ENCODE measurements at regions of chr1 and their contacts with region 1.

Region 1: GRCh38 chr1:85612704-85613361 is 32.3 kb downstream of the CCN1 start:
- DNase-seq: peak; percentile 94
- ATAC-seq: peak; percentile 58
- H3K4me3 ChIP-seq: no peak overlapping the region
- H3K27ac ChIP-seq: peak overlapping the region; percentile 89
- H3K4me1 ChIP-seq: peaks cover 30% of the 10 kb centered on the region
- H3K27me3 ChIP-seq: no peaks in the 10 kb centered on the region
- CTCF ChIP-seq: peak; percentile 76
- POLR2A ChIP-seq: no peak; the same call in 1 of the 2 replicates
- RAD21 ChIP-seq: peak; percentile 78

Region 2: DNA sequence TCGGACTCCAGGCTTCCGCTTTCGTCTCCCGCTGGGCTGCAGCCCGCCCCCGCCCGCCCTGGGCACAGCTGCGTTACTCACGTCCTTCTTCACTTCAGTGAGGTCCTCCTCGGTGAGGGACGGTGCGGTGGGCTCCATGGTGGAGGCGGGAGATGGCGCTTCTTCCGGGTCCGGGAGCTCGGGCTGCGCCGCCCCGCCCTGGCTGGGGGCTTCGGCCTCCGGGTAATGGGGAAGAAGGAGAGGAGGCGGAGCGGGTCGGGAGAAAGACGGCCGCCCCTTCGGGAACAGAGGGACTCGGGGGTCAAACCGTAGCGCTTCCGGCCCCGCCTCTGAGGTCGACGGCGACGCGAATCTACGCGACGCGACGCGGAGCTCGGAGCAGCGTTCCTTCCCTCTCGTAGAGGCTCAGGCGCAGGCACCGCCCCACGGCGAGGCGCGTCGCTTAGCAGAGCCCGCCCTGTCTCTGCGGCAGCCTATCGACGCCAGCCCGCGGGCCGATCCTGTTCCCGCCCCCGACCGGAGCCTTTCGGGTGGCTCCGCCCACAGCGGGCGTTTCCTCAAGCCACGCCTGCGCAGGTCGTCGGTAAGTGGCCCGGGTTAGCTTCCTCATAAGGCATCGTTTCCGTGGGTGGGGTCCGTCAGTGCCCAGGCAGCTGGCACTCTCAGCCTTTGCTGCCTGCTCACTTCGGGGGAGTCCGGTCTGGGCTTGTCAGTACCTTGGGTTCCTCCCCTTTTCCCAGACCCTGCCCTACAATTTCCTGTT is 336.4 kb before region 1 on chr1 and contains the start of gene BCL10:
- CTCF ChIA-PET with region 1: no interaction called
- POLR2A ChIA-PET with region 1: no interaction called
- dilution Hi-C with region 1: no loop called
- in situ Hi-C with region 1: no loop called
- intact Hi-C with region 1: no loop called
- DNase-seq: peak; percentile 97
- ATAC-seq: peak; percentile 96
- H3K4me3 ChIP-seq: peak within 1 kb of the TSS; percentile 97
- H3K27ac ChIP-seq: peak within 1 kb of the TSS; percentile 98
- H3K4me1 ChIP-seq: peaks cover 6% of the 10 kb centered on the region
- H3K27me3 ChIP-seq: no peaks in the 10 kb centered on the region
- CTCF ChIP-seq: no peak
- POLR2A ChIP-seq: peak; percentile 90
- RAD21 ChIP-seq: no peak
- total RNA-seq, gene BCL10: 30.5 and 51.4 TPM in 2 replicates

Region 3: GRCh38 chr1:85484264-85484663 is 128.6 kb before region 1 on chr1:
- CTCF ChIA-PET with region 1: no interaction called
- POLR2A ChIA-PET with region 1: no interaction called
- dilution Hi-C with region 1: no loop called
- in situ Hi-C with region 1: no loop called
- intact Hi-C with region 1: no loop called
- DNase-seq: no peak
- ATAC-seq: no peak
- H3K4me3 ChIP-seq: no peak overlapping the region
- H3K27ac ChIP-seq: no peak overlapping the region
- H3K4me1 ChIP-seq: no peaks in the 10 kb centered on the region; the same call in 1 of the 2 replicates
- H3K27me3 ChIP-seq: no peaks in the 10 kb centered on the region
- CTCF ChIP-seq: no peak
- POLR2A ChIP-seq: no peak
- RAD21 ChIP-seq: no peak

Region 4: GRCh38 chr1:85576642-85577418 is 36.0 kb before region 1 on chr1:
- CTCF ChIA-PET with region 1: interaction called, 6 read pairs
- POLR2A ChIA-PET with region 1: interaction called, 22 read pairs
- dilution Hi-C with region 1: no loop called
- in situ Hi-C with region 1: no loop called
- intact Hi-C with region 1: no loop called
- DNase-seq: peak; percentile 88
- ATAC-seq: peak; percentile 27
- H3K4me3 ChIP-seq: peak overlapping the region; percentile 87
- H3K27ac ChIP-seq: peak overlapping the region; percentile 96
- H3K4me1 ChIP-seq: peaks cover 12% of the 10 kb centered on the region
- H3K27me3 ChIP-seq: no peaks in the 10 kb centered on the region
- CTCF ChIP-seq: peak; percentile 64
- POLR2A ChIP-seq: peak; percentile 41; the same call in 1 of the 2 replicates
- RAD21 ChIP-seq: peak; percentile 39; the same call in 1 of the 2 replicates

Region 5: DNA sequence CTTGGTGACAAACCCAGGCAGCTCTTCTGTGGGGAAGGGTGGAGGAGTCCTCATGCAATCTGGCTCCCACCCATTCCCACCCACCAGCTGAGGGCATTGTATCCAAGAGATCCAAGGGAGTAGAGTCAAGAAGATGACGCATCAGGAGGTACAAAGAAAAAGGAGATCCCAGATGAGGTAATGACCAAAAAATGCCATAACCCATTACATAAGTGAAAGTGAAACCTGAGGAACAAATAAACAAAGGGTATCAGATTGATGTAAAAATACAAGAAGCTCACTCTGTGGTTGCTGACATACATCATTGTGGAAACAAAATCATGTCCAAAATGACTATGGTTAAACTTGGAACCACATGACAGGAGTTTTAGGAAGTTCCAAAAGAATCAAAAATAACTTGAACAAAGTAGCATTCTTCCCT is 10.2 kb after region 1 on chr1:
- CTCF ChIA-PET with region 1: interaction called, 12 read pairs
- POLR2A ChIA-PET with region 1: interaction called, 16 read pairs
- dilution Hi-C with region 1: no loop called
- in situ Hi-C with region 1: no loop called
- intact Hi-C with region 1: loop called (anchors 2 kb)
- DNase-seq: peak; percentile 98
- ATAC-seq: peak; percentile 78
- H3K4me3 ChIP-seq: no peak overlapping the region
- H3K27ac ChIP-seq: peak overlapping the region; percentile 49
- H3K4me1 ChIP-seq: peaks cover 7% of the 10 kb centered on the region
- H3K27me3 ChIP-seq: no peaks in the 10 kb centered on the region
- CTCF ChIP-seq: no peak
- POLR2A ChIP-seq: no peak
- RAD21 ChIP-seq: no peak

Region 6: GRCh38 chr1:85692730-85693314 is 80.0 kb after region 1 on chr1:
- CTCF ChIA-PET with region 1: interaction called, 15 read pairs
- POLR2A ChIA-PET with region 1: interaction called, 4 read pairs
- dilution Hi-C with region 1: no loop called
- in situ Hi-C with region 1: loop called (anchors 5 kb)
- intact Hi-C with region 1: loop called (anchors 1 kb)
- DNase-seq: peak; percentile 78
- ATAC-seq: peak; percentile 74
- H3K4me3 ChIP-seq: no peak overlapping the region
- H3K27ac ChIP-seq: no peak overlapping the region
- H3K4me1 ChIP-seq: no peaks in the 10 kb centered on the region; the same call in 1 of the 2 replicates
- H3K27me3 ChIP-seq: no peaks in the 10 kb centered on the region
- CTCF ChIP-seq: peak; percentile 67
- POLR2A ChIP-seq: no peak
- RAD21 ChIP-seq: peak; percentile 69

Region 7: DNA sequence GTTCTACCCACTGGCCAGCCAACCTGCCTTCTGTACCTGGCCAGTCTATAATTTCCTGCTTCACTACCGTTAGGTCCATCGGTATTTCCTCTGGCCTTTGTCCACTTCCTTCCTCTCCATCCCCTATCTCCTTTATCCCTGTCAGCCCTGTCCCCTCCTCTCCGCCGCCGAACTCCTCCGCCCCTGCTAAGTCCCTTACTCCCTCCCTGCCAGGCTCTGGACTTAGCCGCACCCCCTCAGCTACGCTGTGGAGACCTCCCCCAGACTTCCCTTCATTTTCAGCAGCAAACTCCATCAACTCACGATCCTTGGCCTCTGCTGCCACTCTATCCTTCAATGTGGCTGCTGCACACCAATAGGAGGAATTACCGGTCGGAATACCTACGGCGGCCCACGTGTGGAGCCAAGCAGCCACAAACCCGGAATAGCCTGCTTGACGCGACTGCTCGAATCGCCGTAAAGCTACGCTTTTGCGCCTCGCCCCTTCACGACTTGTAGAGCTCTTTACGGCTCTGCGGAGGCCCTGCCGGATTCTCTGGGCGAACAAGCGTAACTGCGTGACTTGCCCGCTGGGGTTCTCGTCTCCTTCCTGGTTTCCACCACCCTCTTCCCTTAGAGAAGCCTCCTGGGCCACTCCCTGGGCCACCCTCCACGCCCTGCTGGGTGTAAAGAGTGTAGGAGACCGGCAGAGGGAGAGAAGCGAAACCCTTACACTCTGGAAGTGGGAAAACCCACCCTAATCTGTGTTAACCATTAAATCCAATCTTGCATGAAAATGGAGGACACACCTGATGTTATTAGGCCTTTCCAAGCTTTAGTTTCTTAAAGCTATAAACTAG is 95.4 kb after region 1 on chr1 and contains the start of gene ZNHIT6:
- CTCF ChIA-PET with region 1: no interaction called
- POLR2A ChIA-PET with region 1: no interaction called
- dilution Hi-C with region 1: no loop called
- in situ Hi-C with region 1: no loop called
- intact Hi-C with region 1: no loop called
- DNase-seq: peak; percentile 98
- ATAC-seq: peak; percentile 96
- H3K4me3 ChIP-seq: peak within 1 kb of the TSS; percentile 90
- H3K27ac ChIP-seq: peak within 1 kb of the TSS; percentile 89
- H3K4me1 ChIP-seq: peaks cover 1% of the 10 kb centered on the region; the same call in 1 of the 2 replicates
- H3K27me3 ChIP-seq: no peaks in the 10 kb centered on the region
- CTCF ChIP-seq: peak; percentile 45
- POLR2A ChIP-seq: peak; percentile 37; the same call in 1 of the 2 replicates
- RAD21 ChIP-seq: peak; percentile 50
- total RNA-seq, gene ZNHIT6: 9.0 and 17.2 TPM in 2 replicates

Region 8: DNA sequence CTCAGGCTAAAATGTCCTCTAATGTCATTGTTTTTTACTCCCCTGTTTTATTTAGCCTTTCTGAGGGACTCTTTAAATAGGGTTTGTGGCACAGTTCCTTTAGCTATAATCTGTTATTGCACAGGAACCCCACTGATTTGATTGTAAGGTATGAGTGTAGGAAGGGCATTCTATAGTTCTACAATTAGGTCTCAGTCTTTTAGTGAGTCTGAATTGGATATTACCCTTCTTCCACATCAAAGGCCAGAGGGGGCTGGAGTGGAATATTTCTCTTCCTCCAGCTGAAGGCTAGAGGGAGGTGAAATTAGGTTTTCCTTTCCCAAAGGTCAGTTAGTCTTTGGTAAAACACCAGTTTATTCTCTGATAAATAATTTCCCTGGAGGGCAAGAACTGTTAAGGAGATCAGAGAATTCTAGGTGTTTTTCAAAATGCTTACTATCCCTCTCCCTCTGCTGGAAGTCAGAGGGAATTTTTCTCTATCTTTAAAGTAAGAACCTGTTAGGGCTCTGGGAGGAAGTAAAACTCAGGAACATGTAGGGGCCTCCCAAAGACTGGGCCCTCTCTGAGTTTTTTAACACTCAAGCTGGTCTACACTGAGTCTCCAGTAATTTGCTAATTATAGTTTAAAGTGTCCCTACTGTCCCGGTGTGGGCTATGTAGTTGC is 271.7 kb after region 1 on chr1:
- CTCF ChIA-PET with region 1: no interaction called
- POLR2A ChIA-PET with region 1: no interaction called
- dilution Hi-C with region 1: no loop called
- in situ Hi-C with region 1: no loop called
- intact Hi-C with region 1: loop called (anchors 10 kb)
- DNase-seq: peak; percentile 48
- ATAC-seq: peak; percentile 98
- H3K4me3 ChIP-seq: no peak overlapping the region
- H3K27ac ChIP-seq: no peak overlapping the region
- H3K4me1 ChIP-seq: no peaks in the 10 kb centered on the region
- H3K27me3 ChIP-seq: no peaks in the 10 kb centered on the region
- CTCF ChIP-seq: peak; percentile 65
- POLR2A ChIP-seq: no peak
- RAD21 ChIP-seq: peak; percentile 56